ENCODE measurements at regions of chr1 and their contacts with region 1.

Region 1: GRCh38 chr1:246428542-246429308 is 78.4 kb downstream of the SMYD3 start:
- DNase-seq: peak; percentile 98
- H3K4me3 ChIP-seq: no peak overlapping the region
- H3K27ac ChIP-seq: peak overlapping the region; percentile 56
- H3K4me1 ChIP-seq: peaks cover 37% of the 10 kb centered on the region
- H3K27me3 ChIP-seq: no peaks in the 10 kb centered on the region
- CTCF ChIP-seq: no peak

Region 2: GRCh38 chr1:246139745-246140182 is 289.0 kb before region 1 on chr1:
- CTCF ChIA-PET with region 1: no interaction called
- dilution Hi-C with region 1: no loop called
- in situ Hi-C with region 1: no loop called
- intact Hi-C with region 1: loop called (anchors 1 kb)
- DNase-seq: peak; percentile 96
- H3K4me3 ChIP-seq: no peak overlapping the region
- H3K27ac ChIP-seq: peak overlapping the region; percentile 95
- H3K4me1 ChIP-seq: peaks cover 42% of the 10 kb centered on the region
- H3K27me3 ChIP-seq: no peaks in the 10 kb centered on the region
- CTCF ChIP-seq: no peak

Region 3: GRCh38 chr1:246302711-246303317 is 125.9 kb before region 1 on chr1:
- CTCF ChIA-PET with region 1: no interaction called
- dilution Hi-C with region 1: no loop called
- in situ Hi-C with region 1: no loop called
- intact Hi-C with region 1: loop called (anchors 5 kb)
- DNase-seq: no peak
- H3K4me3 ChIP-seq: no peak overlapping the region
- H3K27ac ChIP-seq: no peak overlapping the region
- H3K4me1 ChIP-seq: peaks cover 10% of the 10 kb centered on the region
- H3K27me3 ChIP-seq: no peaks in the 10 kb centered on the region
- CTCF ChIP-seq: no peak

Region 4: GRCh38 chr1:246372559-246372958 is 56.2 kb before region 1 on chr1:
- CTCF ChIA-PET with region 1: no interaction called
- dilution Hi-C with region 1: no loop called
- in situ Hi-C with region 1: no loop called
- intact Hi-C with region 1: loop called (anchors 10 kb)
- DNase-seq: no peak
- H3K4me3 ChIP-seq: no peak overlapping the region
- H3K27ac ChIP-seq: no peak overlapping the region
- H3K4me1 ChIP-seq: no peaks in the 10 kb centered on the region
- H3K27me3 ChIP-seq: no peaks in the 10 kb centered on the region
- CTCF ChIP-seq: no peak